ENCODE measurements at regions of chr5 and their contacts with region 1.

Region 1: DNA sequence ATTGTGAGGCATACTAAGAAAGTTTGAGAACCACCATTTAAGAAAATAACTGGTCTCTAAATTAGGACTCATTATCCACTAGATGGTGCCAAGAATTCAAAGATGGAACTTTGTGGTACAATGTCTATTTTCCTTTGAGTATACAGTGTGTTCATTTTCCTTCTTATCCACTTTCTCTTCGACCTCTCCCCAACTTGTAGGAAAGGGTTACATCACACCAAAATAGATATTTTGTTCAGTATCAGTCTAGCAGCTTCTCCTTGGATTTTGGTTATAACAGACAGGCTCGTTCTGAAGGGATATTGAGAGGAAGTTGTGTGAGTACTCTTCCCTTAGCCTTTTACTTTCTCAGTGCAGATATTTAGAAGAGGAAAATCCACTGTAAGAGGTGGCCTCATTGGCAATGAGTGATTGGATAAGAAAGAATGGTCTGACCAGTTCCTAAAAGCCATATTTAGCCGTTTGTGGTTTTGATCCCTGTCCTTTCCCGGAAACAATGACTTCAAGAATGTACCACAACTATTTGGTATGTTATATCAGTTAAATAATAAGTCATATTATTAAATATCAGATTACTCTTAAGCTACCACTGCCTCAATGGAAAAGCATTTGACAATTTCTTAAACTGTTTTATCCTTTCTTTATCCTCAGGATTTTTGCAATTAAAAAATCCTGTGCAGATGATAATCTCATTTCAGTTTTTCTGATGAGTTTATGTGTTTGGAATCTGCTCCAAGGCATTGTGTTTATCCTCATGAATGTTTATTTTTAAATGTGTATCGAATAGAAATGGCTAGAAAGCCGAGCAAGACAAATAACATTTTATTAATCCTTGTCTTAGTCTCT is 69.0 kb upstream of the GRAMD2B start:
- DNase-seq: no peak
- H3K4me3 ChIP-seq: no peak overlapping the region
- H3K27ac ChIP-seq: peak overlapping the region in 2 of 3 donors; percentile 19 to 73
- H3K4me1 ChIP-seq: peaks cover 7 to 9% of the 10 kb centered on the region in 2 donors
- H3K27me3 ChIP-seq: no peaks in the 10 kb centered on the region
- CTCF ChIP-seq: peak in 5 of 6 experiments; percentile 16 to 90 (median 58)
- POLR2A ChIP-seq: no peak

Region 2: GRCh38 chr5:126414874-126415502 is 60.8 kb after region 1 on chr5:
- intact Hi-C with region 1: loop called (anchors 10 kb)
- DNase-seq: peak; percentile 46 to 53
- H3K4me3 ChIP-seq: no peak overlapping the region
- H3K27ac ChIP-seq: peak overlapping the region; percentile 46 to 70 (median 59)
- H3K4me1 ChIP-seq: peaks cover 4 to 15% of the 10 kb centered on the region in 2 donors
- H3K27me3 ChIP-seq: no peaks in the 10 kb centered on the region
- CTCF ChIP-seq: no peak
- POLR2A ChIP-seq: no peak

Region 3: DNA sequence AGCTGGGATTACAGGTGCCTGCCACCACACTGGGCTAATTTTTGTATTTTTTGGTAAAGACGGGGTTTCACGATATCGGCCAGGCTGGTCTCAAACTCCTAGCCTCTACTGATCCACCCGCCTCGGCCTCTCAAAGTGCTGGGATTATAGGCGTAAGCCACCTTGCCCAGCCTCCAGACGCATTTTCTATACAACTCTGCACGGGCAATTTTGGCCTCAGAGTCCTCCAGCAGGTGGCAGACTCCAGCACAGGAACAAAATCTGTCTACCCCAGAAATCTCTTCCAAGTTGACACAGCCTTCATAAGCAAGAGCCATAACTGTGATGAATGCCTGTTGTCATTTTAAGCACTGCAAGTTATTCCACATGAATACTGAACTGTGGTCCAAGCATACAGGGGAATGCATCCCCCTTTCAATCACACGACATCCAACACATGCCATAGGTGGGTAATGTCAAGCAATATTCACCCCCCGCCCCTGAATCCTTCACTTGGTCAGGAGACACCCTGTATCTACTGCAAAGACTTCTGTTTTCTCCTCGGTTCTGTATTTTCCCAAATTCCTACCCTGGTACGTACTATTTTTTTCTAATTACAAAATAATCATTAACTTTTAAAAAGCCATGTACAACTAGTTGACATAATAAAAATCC is 190.0 kb after region 1 on chr5:
- intact Hi-C with region 1: loop called (anchors 5 kb)
- DNase-seq: peak; percentile 27 to 34
- H3K4me3 ChIP-seq: no peak overlapping the region
- H3K27ac ChIP-seq: no peak overlapping the region
- H3K4me1 ChIP-seq: peaks cover 4 to 5% of the 10 kb centered on the region in 2 donors
- H3K27me3 ChIP-seq: no peaks in the 10 kb centered on the region
- CTCF ChIP-seq: peak in 3 of 6 experiments; percentile 27 to 46 (median 44)
- POLR2A ChIP-seq: no peak

Region 4: GRCh38 chr5:126594676-126595485 is 240.6 kb after region 1 on chr5 and contains the start of gene ALDH7A1:
- intact Hi-C with region 1: loop called (anchors 5 kb)
- DNase-seq: peak; percentile 95 to 97
- H3K4me3 ChIP-seq: peak within 1 kb of the TSS; percentile 21 to 74 (median 49)
- H3K27ac ChIP-seq: peak within 1 kb of the TSS; percentile 62 to 78 (median 63)
- H3K4me1 ChIP-seq: peaks cover 9 to 12% of the 10 kb centered on the region in 2 donors
- H3K27me3 ChIP-seq: no peaks in the 10 kb centered on the region
- CTCF ChIP-seq: peak; percentile 19 to 74 (median 58)
- POLR2A ChIP-seq: peak; percentile 24 to 87
- total RNA-seq, gene ALDH7A1: 25.3 to 57.3 (median 41.5) TPM